ENCODE measurements at regions of chr19 and their contacts with region 1.

Region 1: GRCh38 chr19:16025108-16026101 is 50.9 kb upstream of the TPM4 start:
- DNase-seq: peak; percentile 16
- H3K4me3 ChIP-seq: no peak overlapping the region
- H3K27me3 ChIP-seq: peaks cover 2% of the 10 kb centered on the region; the same call in 1 of the 2 replicates
- CTCF ChIP-seq: peak; percentile 75

Region 2: DNA sequence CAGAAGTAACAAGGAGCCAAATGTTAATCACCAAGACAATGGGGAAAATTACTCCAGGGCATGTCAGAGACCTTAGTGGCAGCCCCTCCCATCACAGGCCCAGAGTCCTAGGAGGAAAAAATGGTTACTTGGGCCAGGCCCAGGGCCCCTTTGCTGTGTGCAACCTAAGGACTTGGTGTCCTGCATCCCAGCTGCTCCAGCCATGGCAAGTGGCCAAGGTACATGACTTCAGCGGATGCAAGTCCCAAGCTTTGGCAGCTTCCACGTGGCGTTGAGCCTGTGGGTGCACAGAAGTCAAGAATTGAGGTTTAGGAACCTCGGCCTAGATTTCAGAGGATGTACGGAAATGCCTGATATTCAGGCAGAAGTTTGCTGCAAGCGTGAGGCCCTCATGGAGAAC is 29.9 kb before region 1 on chr19:
- CTCF ChIA-PET with region 1: no interaction called
- POLR2A ChIA-PET with region 1: no interaction called
- DNase-seq: no peak
- H3K4me3 ChIP-seq: no peak overlapping the region
- H3K27me3 ChIP-seq: no peaks in the 10 kb centered on the region; the same call in 1 of the 2 replicates
- CTCF ChIP-seq: no peak

Region 3: GRCh38 chr19:16185123-16185767 is 159.8 kb after region 1 on chr19 and contains the start of gene FAM32A:
- CTCF ChIA-PET with region 1: interaction called, 27 read pairs
- POLR2A ChIA-PET with region 1: no interaction called
- DNase-seq: peak; percentile 96
- H3K4me3 ChIP-seq: peak within 1 kb of the TSS; percentile 55
- H3K27me3 ChIP-seq: no peaks in the 10 kb centered on the region
- CTCF ChIP-seq: peak; percentile 25; the same call in 1 of the 2 replicates
- polyA plus RNA-seq, gene FAM32A: 140 and 156 TPM in 2 replicates